ENCODE measurements at regions of chr6 and their contacts with region 1.

Region 1: DNA sequence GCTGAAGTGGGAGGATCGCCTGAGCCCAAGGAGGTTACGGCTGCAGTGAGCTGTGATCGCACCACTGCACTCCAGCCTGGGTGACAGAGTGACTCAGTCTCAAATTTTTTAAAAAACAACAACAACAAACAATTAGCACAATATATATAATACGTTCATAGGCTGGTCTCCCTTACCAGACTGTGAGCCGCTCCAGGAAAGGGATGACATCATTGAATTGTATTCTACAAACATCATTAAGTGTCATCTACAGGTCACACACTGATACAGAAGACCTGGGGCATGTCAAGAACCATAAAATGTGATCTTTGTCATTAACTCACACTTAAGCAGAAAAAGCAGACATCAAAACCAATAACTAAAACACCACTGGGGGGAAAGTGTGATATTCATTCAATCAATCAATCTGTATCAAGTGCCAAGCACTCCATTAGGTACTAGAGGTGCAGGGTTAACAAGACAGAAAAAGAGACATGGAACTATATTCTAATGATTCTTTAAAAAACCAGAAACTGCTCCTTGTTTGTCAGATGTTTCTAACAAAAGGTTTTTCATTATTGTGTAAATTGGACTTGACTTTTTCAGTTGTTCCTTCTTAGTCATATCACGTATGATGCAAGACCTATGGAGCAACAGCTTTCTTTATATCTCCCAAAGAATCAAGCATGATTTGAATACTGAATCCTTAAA is 17.8 kb downstream of the MAP3K5 start:
- DNase-seq: no peak
- H3K4me3 ChIP-seq: no peak overlapping the region
- CTCF ChIP-seq: no peak

Region 2: DNA sequence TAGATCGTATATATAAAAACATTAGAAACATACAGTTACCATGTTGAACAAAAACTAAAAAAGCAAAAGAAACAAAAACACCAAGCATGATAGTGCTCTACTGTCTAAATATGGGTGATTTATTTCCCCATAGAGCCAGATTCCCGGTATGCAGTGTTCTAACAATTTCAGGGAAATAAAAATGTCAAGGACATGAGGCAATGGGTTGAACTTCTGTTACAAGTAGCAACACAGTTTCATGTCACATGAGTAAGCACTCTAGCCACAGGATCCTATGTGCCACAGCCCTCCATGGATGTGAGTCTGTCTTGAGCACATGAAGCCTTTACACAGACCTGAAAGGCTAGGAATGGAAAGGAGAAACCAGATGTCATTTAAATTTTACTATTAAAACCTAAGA is 78.3 kb before region 1 on chr6:
- in situ Hi-C with region 1: loop called (anchors 5 kb)
- DNase-seq: no peak
- H3K4me3 ChIP-seq: no peak overlapping the region
- CTCF ChIP-seq: no peak

Measured in astrocyte of the cerebellum (primary cell).